ENCODE measurements at regions of chr7 and their contacts with region 1.

Region 1: DNA sequence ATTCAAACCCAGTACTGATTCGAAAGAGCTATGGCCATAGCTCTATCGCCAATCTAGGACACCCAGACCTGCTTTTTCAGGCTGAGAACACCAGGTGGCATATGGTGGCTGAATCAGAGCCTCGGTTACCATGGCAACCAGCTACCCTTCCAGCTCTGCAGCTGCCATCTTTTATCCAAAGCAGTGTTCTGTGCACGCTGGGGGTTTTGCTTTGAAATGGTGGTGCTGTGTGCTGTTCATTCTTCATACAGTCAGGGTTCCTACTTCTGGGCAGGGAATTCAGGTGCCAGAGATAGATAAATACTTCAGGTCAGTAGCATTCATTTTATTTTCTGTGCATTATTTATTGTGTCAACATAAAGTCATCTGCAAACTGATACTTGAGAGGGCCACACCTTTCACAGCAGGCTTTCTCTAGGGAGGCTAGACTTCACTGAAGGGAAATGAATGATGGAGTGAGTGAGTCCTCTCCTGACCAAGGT is 85.4 kb downstream of the AKR1D1 start:
- DNase-seq: peak; percentile 6
- H3K4me3 ChIP-seq: no peak overlapping the region
- H3K27me3 ChIP-seq: no peaks in the 10 kb centered on the region
- CTCF ChIP-seq: peak; percentile 69

Region 2: DNA sequence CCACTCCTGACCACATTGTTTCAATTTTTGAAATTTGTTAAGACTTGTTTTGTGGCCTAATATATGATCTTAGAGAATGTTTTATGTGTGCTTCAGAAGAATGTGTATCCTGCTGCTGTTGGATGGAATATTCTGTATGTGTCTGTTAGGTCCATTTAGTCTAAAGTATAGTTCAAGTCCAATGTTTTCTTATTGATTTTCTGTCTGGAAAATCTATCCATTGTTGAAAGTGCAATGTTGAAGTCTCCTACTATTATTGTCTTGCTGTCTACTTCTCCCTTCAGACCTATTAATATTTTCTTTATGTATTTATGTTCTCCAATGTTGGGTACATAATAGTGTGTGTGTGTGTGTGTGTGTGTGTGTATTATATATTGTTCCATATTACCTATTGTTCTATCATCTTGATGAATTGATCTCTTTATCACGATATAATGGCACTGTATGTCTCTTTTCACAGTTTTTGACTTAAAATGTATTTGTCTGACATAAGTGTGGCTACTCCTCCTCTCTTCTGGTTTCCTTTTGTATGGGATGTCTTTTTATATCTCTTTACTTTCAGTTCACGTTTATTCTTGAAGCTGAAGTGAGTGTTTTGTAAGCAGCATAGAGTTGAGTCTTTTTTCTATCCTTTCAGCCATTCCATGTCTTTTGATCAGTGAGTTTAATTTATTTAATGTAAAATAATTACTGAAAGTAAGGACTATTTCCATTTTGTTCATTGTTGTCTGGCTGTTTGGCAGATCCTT is 24.0 kb before region 1 on chr7:
- CTCF ChIA-PET with region 1: no interaction called
- POLR2A ChIA-PET with region 1: no interaction called
- DNase-seq: no peak
- H3K4me3 ChIP-seq: no peak overlapping the region
- H3K27me3 ChIP-seq: no peaks in the 10 kb centered on the region
- CTCF ChIP-seq: no peak

Region 3: DNA sequence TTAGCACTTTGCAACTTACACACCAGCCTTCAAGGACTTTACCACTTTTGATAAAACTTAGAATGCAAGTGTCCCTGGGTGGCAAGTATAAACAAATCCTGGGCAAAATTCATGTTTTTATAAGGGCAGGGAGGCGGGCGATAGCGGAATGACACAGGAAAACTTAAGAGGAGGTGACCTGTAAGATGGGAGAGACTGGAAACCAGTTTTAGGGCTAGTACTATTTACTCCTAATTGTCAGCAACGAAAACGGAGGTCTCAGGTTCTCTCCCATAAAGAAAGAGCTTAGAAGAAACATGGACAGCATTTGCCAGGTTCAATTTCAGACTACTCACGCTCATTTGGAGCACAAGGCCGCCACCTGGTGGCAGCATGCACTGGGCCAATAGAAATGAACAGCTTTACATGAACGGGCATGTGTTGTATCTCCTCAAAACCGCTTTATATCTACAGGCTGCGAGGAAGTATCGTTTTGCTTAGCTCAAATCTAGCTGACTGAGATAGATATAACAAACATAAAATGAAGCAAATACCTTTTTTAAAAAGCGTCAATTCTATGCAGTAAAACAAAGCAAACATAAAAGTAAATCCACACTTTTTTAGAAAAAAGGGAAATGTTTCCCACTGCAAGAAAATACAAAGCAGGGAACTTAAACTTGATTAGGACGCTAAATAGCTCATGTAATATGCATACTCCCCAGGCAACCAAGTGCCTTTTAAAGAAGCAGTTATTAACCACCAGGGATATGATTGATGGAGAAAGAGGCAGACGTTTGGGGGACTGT is 577.1 kb after region 1 on chr7:
- CTCF ChIA-PET with region 1: interaction called, 29 read pairs
- POLR2A ChIA-PET with region 1: no interaction called
- DNase-seq: peak; percentile 26
- H3K4me3 ChIP-seq: no peak overlapping the region
- H3K27me3 ChIP-seq: no peaks in the 10 kb centered on the region
- CTCF ChIP-seq: peak; percentile 92

Measured in BJ (cell line).